SK-N-SH (cell line): ENCODE measurements at regions of chr1 and their contacts with region 1.

Region 1: DNA sequence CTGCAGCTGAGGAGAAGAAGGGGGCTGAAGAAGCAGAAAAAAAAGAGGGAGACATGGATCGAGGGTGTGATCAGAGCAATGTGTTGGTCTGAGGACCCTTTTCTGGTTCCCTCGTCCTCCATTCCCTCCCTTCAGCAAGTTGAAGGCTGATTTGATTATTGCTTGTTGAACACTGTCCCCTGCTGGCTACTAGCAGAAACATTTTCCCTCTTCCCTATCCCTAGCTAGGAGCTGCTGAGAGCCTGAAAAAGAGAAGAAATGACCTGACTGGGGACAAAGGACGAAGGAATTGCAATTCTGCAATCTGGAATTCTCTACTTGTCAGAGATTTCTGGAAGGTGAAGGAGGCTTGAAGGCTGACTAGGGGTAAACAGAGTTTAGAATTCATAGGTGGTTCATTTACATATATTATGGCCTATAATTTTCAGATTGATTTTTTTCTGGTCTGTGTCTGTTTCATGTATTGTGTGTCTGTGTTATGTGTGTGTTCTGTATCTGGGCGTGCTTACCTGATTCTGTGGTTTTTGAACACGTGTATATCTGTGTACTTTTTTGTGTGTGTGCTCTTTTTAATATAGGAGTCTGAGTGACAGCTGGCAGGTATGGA is 9.8 kb downstream of the NHLH1 start:
- DNase-seq: peak; percentile 79
- H3K4me3 ChIP-seq: no peak overlapping the region; a peak in 1 of 4 replicates
- H3K27ac ChIP-seq: no peak overlapping the region
- H3K4me1 ChIP-seq: peaks cover 0 to 9% of the 10 kb centered on the region in 2 experiments; a peak in 2 of 4 replicates
- H3K27me3 ChIP-seq: no peaks in the 10 kb centered on the region
- CTCF ChIP-seq: peak; percentile 93
- EP300 ChIP-seq: no peak
- RAD21 ChIP-seq: peak; percentile 92

Region 2: GRCh38 chr1:160342953-160343869 is 33.4 kb before region 1 on chr1 and contains the starts of genes COPA and NCSTN:
- CTCF ChIA-PET with region 1: interaction called, 20 read pairs
- POLR2A ChIA-PET with region 1: no interaction called
- DNase-seq: peak; percentile 90
- H3K4me3 ChIP-seq: peak within 1 kb of the TSS; percentile 94 to 98
- H3K27ac ChIP-seq: peak within 1 kb of the TSS; percentile 89
- H3K4me1 ChIP-seq: peaks cover 5 to 15% of the 10 kb centered on the region in 2 experiments; a peak in 2 of 4 replicates
- H3K27me3 ChIP-seq: no peaks in the 10 kb centered on the region
- CTCF ChIP-seq: no peak
- EP300 ChIP-seq: 0 out of 4 replicates have a peak, but pooled peaks of 1 of the 2 experiments have one; percentile 23
- RAD21 ChIP-seq: no peak
- polyA plus RNA-seq, gene COPA: 91.4 and 122 TPM in 2 replicates
- polyA plus RNA-seq, gene NCSTN: 165 and 226 TPM in 2 replicates

Region 3: GRCh38 chr1:160354388-160354985 is 22.1 kb before region 1 on chr1:
- CTCF ChIA-PET with region 1: interaction called, 100 read pairs
- POLR2A ChIA-PET with region 1: no interaction called
- DNase-seq: peak; percentile 53
- H3K4me3 ChIP-seq: peak overlapping the region in 1 of 2 experiments; percentile 28; a peak in 1 of 4 replicates
- H3K27ac ChIP-seq: no peak overlapping the region
- H3K4me1 ChIP-seq: no peaks in the 10 kb centered on the region
- H3K27me3 ChIP-seq: no peaks in the 10 kb centered on the region
- CTCF ChIP-seq: peak; percentile 70
- EP300 ChIP-seq: no peak
- RAD21 ChIP-seq: peak; percentile 44

Region 4: DNA sequence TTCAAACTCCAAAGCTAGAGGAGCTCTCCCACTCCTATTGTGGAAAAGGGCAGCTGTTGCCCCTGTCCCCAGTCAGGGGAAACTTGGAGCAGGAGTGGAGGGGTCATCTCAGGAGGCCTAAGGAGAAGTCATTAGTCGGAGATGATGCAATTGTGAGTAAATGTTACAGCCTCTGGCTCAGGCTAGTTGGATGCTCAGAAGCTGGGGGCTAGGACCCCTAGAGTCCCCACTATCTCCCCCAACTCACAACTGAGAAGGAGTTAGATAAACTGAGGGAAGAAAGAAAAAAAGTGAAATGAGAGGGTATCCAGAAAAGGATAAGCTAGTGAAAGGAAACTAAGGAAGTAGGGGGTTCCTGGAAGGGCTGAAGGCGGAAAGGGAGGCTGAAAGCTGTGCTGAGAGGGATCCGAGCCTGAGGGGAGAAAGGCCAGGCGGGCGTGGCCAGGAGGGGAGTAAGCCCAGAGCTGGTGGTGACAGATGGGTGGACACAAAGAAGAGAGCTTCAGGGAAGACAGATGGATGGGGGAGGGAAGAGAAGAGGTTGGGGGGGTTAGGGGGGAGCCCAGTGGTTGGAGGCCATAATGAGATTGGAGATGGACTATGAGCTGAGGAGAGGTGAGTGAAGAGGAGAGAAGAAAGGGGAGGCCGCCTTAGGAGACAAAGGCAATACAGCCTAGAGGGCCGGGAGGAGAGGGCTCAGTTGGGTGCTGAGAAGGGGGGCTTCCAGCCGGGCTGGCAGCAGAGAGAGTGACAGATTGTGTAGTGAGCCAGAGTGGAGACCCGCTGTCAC is 14.3 kb before region 1 on chr1:
- CTCF ChIA-PET with region 1: interaction called, 85 read pairs
- POLR2A ChIA-PET with region 1: no interaction called
- DNase-seq: no peak
- H3K4me3 ChIP-seq: no peak overlapping the region
- H3K27ac ChIP-seq: no peak overlapping the region
- H3K4me1 ChIP-seq: no peaks in the 10 kb centered on the region
- H3K27me3 ChIP-seq: no peaks in the 10 kb centered on the region
- CTCF ChIP-seq: no peak
- EP300 ChIP-seq: no peak
- RAD21 ChIP-seq: no peak

Region 5: DNA sequence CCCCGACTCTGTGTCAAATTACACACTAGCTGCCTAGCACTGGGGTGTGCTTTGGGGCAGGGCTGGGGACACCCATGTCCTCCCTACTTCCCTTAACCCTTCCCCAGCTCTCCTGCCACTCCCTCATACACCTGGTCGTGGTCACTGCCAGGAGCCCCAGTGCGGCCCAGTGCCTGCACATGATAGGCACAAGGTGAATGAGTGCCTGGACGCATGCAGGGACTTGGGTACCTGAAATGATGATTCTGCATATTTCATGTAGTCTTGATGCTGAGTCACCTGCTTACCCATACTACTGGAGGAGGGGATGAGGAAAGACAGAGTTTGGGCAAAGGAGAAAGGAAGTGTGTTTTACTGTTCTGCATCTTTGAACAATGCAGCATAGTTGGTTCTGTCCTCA is 22.2 kb after region 1 on chr1:
- CTCF ChIA-PET with region 1: interaction called, 21 read pairs
- POLR2A ChIA-PET with region 1: interaction called, 3 read pairs
- DNase-seq: no peak
- H3K4me3 ChIP-seq: no peak overlapping the region
- H3K27ac ChIP-seq: no peak overlapping the region
- H3K4me1 ChIP-seq: peaks cover 0 to 27% of the 10 kb centered on the region in 2 experiments; a peak in 2 of 4 replicates
- H3K27me3 ChIP-seq: no peaks in the 10 kb centered on the region; the same call in 1 of the 2 replicates
- CTCF ChIP-seq: no peak
- EP300 ChIP-seq: no peak
- RAD21 ChIP-seq: no peak

Region 6: DNA sequence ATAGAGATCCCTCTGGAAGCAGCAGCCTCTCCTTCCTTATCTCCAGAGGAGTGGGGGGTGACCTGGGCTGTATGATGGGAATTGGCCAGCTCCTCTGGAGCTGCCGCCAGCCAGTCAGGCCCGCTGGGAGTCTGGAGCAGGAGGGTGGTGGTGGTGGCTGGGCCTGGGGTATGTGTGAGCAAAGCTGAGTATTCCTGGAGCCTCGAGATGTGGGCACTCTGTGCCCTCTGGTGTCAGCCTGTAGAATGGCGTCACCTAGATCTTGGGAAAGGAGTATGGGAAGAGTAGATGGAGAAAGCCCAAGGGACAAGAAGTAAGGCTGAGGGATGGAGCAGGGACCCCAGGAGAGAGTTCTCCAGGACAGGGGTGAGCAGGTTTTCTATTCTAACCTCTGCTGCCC is 39.7 kb after region 1 on chr1:
- CTCF ChIA-PET with region 1: interaction called, 11 read pairs
- POLR2A ChIA-PET with region 1: interaction called, 3 read pairs
- DNase-seq: peak; percentile 74
- H3K4me3 ChIP-seq: no peak overlapping the region
- H3K27ac ChIP-seq: no peak overlapping the region
- H3K4me1 ChIP-seq: peaks cover 0 to 13% of the 10 kb centered on the region in 2 experiments; a peak in 1 of 4 replicates
- H3K27me3 ChIP-seq: no peaks in the 10 kb centered on the region
- CTCF ChIP-seq: peak; percentile 59
- EP300 ChIP-seq: no peak
- RAD21 ChIP-seq: peak; percentile 80